Activated B cell treated with CpG ODN at 0.5 μM for 24 hours (primary cell): ENCODE measurements at regions of chr7 and their contacts with region 1.

Region 1: GRCh38 chr7:7182156-7183060 is at the start of gene C1GALT1:
- DNase-seq: peak; percentile 94
- ATAC-seq: peak; percentile 84
- H3K4me3 Mint-ChIP-seq: peak within 1 kb of the TSS; percentile 99
- H3K27ac Mint-ChIP-seq: peak within 1 kb of the TSS; percentile 100
- H3K4me1 Mint-ChIP-seq: peaks cover 43% of the 10 kb centered on the region
- H3K27me3 Mint-ChIP-seq: no peaks in the 10 kb centered on the region
- CTCF ChIP-seq: no peak
- total RNA-seq, gene C1GALT1: 42.1 and 44.2 TPM in 2 replicates

Region 2: DNA sequence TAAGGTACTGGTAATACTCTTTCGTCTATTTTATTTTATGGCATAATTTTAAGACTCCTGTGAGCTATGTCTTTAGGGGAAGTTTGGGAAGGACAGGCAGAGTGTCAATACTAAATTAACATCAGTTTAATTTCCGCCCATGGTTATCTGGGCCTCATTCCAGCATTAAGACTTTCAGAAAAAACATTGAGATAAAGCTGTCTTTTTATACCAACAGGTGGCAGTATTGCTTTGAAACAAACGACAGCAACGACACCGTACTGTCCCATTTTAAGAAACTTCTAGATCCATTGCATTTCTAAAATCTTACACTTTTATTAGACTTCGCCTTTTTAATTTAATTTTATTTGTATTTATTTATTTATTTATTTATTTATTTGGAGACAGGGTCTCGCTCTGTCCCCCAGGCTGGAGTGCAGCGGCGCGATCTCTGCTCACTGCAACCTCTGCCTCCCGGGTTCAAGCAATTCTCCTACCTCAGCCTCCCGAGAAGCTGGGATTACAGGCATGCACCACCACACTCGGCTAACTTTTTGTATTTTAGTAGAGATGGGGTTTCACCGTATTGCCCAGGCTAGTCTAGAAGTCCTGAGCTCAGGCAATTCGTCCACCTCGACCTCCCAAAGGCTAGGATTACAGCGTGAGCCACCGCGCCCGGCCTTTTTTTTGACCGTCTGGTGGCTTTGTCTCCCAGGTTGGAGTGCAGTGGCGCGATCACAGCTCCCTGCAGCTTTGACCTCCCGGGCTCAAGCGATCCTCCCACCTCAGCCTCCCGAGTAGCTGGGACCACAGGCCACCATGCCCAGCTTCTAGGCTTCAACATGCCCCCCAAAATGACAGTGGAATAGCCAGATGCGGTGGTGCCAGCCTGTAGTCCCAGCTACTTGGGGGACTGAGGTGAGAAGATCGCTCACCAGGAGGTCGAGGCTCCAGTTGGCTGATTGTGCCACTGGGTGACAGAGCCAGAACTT is 78.8 kb before region 1 on chr7:
- CTCF ChIA-PET with region 1: interaction called, 25 read pairs
- POLR2A ChIA-PET with region 1: interaction called, 19 read pairs
- intact Hi-C with region 1: loop called (anchors 1 kb)
- DNase-seq: no peak
- ATAC-seq: peak; percentile 71
- H3K4me3 Mint-ChIP-seq: no peak overlapping the region
- H3K27ac Mint-ChIP-seq: no peak overlapping the region
- H3K4me1 Mint-ChIP-seq: peaks cover 4% of the 10 kb centered on the region
- H3K27me3 Mint-ChIP-seq: no peaks in the 10 kb centered on the region
- CTCF ChIP-seq: no peak

Region 3: GRCh38 chr7:7201578-7202374 is 19.4 kb after region 1 on chr7:
- CTCF ChIA-PET with region 1: no interaction called
- POLR2A ChIA-PET with region 1: interaction called, 31 read pairs
- intact Hi-C with region 1: loop called (anchors 1 kb)
- DNase-seq: peak; percentile 35
- ATAC-seq: peak; percentile 100
- H3K4me3 Mint-ChIP-seq: peak overlapping the region; percentile 67
- H3K27ac Mint-ChIP-seq: peak overlapping the region; percentile 86
- H3K4me1 Mint-ChIP-seq: peaks cover 90% of the 10 kb centered on the region
- H3K27me3 Mint-ChIP-seq: no peaks in the 10 kb centered on the region
- CTCF ChIP-seq: no peak

Region 4: DNA sequence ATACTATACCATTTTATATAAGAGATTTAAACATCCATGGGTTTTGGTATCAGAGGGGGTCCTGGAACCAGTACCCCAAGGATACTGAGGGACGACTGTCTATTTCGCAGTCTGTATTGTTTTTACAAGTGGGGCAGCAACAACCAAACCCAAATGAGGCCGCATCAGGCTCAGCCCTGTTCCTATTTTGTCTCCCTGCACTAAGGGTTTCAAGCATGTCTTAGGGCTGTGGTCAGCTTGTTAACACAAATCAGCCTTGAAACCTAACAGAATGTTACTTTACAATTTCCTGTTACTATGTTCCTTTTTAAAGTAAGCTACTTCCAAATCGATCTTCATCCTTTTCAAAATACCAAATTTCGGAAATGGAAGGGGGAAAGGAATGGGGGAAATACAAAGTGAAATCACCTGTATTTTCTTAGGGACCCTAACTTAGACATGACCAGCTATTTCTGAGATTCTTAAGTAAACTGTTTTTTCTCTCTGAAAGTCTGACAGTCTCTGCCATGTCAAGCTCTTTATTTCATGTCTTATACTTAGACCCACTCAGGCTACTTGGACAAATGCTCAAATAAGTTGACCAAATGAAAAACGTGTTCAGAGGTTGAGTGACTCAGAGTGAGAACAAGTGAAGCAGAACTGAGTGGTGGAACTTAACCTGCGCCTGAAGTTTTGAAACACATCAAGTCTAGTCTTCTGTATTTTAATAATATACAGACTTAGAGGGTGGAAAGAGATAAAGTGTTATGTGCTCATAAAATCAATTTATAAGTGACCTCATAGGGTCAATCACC is 75.7 kb after region 1 on chr7:
- CTCF ChIA-PET with region 1: interaction called, 13 read pairs
- POLR2A ChIA-PET with region 1: interaction called, 53 read pairs
- intact Hi-C with region 1: loop called (anchors 1 kb)
- DNase-seq: no peak
- ATAC-seq: peak; percentile 77
- H3K4me3 Mint-ChIP-seq: peak overlapping the region; percentile 78
- H3K27ac Mint-ChIP-seq: peak overlapping the region; percentile 89
- H3K4me1 Mint-ChIP-seq: peaks cover 66% of the 10 kb centered on the region
- H3K27me3 Mint-ChIP-seq: no peaks in the 10 kb centered on the region
- CTCF ChIP-seq: no peak

Region 5: DNA sequence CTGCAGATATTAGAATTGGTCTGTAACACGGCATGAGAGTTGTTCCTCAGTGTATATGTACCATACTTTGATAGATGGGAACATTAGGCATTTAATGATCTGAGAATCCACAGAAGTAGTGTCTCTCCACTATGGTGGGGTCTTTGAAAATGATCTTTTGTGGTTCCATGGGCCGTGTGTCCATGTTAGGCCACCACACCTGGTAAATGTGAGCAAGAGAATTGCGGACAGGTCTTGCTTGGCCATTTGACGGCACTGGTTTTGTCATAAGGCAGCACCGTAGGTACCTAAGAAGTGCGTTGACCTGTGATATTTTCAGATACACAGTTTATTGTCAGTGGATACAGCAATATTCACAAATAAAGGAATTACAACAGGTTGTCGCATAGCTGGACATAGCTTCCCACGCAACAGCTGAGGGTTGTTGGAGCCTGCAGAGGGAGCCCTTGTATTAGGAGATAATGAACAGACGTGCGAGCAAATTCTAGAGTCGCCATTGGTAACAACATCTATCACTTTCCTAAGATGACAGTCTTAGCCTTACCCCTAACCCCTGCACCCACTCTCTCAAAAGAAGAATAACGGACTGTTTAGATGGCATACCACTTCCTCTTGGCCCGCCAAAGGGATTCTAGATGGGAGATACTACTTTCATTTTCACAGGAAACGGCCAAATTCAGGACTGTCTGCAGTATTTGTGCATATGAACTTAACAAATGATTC is 241.9 kb after region 1 on chr7:
- CTCF ChIA-PET with region 1: interaction called, 5 read pairs
- POLR2A ChIA-PET with region 1: interaction called, 3 read pairs
- intact Hi-C with region 1: loop called (anchors 1 kb)
- DNase-seq: no peak
- ATAC-seq: peak; percentile 75
- H3K4me3 Mint-ChIP-seq: peak overlapping the region; percentile 86
- H3K27ac Mint-ChIP-seq: peak overlapping the region; percentile 37
- H3K4me1 Mint-ChIP-seq: peaks cover 6% of the 10 kb centered on the region
- H3K27me3 Mint-ChIP-seq: no peaks in the 10 kb centered on the region
- CTCF ChIP-seq: no peak

Region 6: DNA sequence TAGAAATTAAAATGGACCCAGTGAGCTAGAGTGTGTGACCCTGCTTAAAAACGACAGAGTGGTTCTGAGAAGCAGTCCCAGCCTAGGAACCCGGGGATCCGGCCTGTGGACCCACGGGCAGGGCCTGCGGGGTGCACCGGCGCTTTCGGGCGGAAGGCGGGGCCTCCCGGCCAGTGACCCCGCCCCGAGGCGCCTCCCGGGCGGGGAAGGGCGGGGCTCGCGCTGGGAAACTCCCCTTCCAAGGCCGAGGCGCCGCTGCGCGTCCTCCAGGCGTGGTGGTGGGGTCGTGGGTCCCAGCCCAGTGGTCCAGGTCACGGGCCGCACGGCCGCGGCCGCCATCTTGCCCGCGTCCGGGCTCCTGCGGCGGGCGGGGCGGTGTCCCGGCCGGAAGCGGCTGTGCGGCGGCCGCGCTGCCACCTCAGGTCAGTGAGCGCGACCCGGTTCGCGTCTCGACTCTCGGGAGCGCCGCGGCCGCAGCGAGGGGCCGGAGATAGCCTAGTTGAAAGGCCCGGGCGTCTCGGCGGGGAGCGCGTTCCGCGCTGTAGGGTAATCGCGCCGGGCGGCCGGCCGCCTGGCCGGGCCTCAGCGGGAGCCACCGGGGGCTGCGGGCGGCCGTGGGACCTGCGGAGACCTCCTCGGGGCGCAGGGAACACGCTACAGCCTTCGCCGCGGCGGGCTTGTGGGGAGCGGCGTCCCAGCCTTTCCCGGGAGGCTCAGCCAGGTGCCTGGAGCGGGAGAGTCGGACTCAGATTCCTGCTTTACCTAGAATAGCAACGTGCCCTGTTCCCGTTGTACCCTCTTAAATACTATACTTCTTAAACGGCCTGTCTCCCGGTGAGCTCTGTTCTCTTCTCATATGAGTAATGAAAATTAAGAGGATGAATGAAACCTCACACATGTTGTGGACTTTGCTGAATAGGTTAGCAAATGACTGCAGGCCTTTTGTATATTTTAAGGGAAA is 384.5 kb after region 1 on chr7 and contains the start of gene MIOS:
- CTCF ChIA-PET with region 1: interaction called, 3 read pairs
- POLR2A ChIA-PET with region 1: interaction called, 30 read pairs
- intact Hi-C with region 1: loop called (anchors 1 kb)
- DNase-seq: peak; percentile 85
- ATAC-seq: peak; percentile 83
- H3K4me3 Mint-ChIP-seq: peak within 1 kb of the TSS; percentile 85
- H3K27ac Mint-ChIP-seq: peak within 1 kb of the TSS; percentile 90
- H3K4me1 Mint-ChIP-seq: peaks cover 35% of the 10 kb centered on the region
- H3K27me3 Mint-ChIP-seq: no peaks in the 10 kb centered on the region
- CTCF ChIP-seq: no peak
- total RNA-seq, gene MIOS: 70.2 and 81.3 TPM in 2 replicates